ENCODE measurements at regions of chr9 and their contacts with region 1.

Region 1: DNA sequence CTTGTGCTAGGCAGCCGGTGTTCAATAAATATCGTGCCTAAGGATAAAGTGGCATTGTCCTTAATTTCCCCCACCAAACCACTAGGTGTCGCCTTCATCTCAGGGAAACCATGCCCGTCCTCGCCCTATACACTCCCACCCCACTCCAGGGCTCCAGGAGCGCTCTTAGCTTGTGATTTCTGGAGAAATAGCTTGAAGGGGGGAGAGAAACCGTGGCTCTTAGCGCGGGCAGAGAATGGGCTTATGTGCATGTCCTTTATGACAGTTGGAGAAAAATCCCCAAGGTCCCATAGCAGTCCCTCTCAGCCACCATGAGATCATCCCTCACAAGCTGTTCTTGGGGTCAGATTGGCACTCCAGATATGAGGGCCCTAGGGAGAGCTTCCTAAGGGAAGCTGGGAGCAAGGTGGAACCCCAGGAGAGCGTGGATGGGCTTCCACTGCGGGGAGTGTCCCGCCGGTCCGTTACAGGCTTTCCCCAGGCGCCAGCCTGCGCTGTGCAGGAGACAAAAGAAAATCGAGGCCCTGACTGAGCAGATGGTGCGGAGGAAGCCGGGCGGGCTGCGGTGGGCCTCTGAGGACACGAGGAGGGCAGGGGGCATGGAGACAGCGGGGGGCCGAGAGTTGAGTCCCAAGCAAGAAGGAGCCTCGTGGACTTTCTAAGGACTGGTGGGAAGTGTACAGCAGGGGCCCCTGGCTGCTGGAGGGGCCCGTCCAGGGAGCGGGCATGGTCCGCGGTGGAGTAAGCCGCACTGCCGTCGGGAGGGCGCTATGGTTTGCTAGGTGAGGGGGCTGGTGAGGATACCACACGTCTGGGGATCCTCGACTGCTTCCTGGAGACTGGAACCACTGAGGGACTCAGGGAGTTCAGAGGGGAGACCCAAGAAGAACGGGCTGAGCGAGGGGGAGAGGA is 750 bp upstream of the NPR2 start:
- DNase-seq: peak; percentile 71
- H3K4me3 ChIP-seq: peak overlapping the region in 3 of 4 donors; percentile 41 to 55 (median 43)
- H3K27ac ChIP-seq: peak overlapping the region; percentile 66 to 89 (median 73)
- H3K4me1 ChIP-seq: peaks cover 0 to 36% (median 12%) of the 10 kb centered on the region in 4 donors
- H3K27me3 ChIP-seq: no peaks in the 10 kb centered on the region
- CTCF ChIP-seq: peak; percentile 84 to 92 (median 87)
- EP300 ChIP-seq: no peak
- POLR2A ChIP-seq: no peak

Region 2: GRCh38 chr9:35599763-35600604 is 190.7 kb before region 1 on chr9:
- in situ Hi-C with region 1: no loop called
- intact Hi-C with region 1: no loop called
- DNase-seq: no peak
- H3K4me3 ChIP-seq: no peak overlapping the region
- H3K27ac ChIP-seq: no peak overlapping the region
- H3K4me1 ChIP-seq: peaks cover 0 to 13% (median 12%) of the 10 kb centered on the region in 4 donors
- H3K27me3 ChIP-seq: no peaks in the 10 kb centered on the region
- CTCF ChIP-seq: no peak
- EP300 ChIP-seq: no peak
- POLR2A ChIP-seq: no peak

Region 3: DNA sequence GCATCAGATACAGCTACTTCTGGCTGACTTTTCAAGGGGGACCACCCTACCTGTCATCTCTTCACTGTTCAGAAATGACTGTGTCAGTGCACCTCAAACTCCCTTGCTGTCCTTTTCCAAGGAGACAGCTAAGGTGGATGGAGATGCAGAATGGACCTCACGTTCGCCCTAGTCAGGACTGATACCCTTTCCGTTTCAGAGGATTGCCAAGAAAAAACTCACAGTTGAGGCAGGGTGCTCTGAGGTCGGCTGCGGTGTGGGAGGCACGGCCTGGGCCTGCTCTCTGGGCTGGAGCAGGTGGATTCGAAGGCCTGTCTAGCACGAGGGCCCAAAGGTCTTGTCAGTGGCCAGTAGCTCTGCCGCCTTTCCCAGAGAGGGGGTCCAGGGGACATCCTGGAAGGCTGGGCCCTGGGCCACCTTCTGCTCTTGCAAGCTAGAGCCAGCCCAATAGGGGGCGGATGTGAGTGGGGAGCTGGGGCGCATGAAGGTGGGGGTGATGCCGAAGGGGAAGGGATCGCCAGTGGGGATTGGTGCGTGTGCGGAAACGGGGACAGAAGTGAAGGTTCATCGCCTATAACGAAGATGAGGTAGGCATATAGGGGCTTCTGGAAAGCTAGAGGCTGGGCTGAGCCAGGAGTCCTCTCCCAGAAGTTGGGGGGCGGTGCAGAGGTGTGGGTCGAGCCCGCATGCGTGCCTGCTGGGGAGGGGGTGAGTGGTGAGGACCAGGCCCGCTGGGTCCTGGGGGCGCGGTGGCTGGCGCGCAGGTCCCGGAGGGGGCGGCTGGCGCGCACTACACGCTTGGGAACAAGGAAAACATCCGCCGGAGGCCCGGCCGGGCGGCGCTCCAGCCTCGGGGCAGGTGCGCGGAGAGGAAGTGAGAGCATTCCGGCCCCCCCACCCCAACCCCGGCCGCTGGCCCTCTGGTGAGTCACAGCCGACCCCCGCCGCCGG is 34.1 kb before region 1 on chr9:
- in situ Hi-C with region 1: no loop called
- intact Hi-C with region 1: no loop called
- DNase-seq: peak; percentile 83
- H3K4me3 ChIP-seq: peak overlapping the region; percentile 49 to 89 (median 70)
- H3K27ac ChIP-seq: peak overlapping the region; percentile 91 to 97 (median 93)
- H3K4me1 ChIP-seq: peaks cover 11 to 36% (median 16%) of the 10 kb centered on the region in 4 donors
- H3K27me3 ChIP-seq: no peaks in the 10 kb centered on the region
- CTCF ChIP-seq: peak; percentile 68 to 91 (median 76)
- EP300 ChIP-seq: no peak
- POLR2A ChIP-seq: peak; percentile 34

Region 4: GRCh38 chr9:35882263-35882848 is 91.7 kb after region 1 on chr9:
- in situ Hi-C with region 1: loop called in 2 of 4 experiments (anchors 5 to 10 kb)
- intact Hi-C with region 1: loop called (anchors 2 kb)
- DNase-seq: peak; percentile 90
- H3K4me3 ChIP-seq: no peak overlapping the region
- H3K27ac ChIP-seq: no peak overlapping the region
- H3K4me1 ChIP-seq: no peaks in the 10 kb centered on the region
- H3K27me3 ChIP-seq: peaks cover 5% of the 10 kb centered on the region
- CTCF ChIP-seq: peak; percentile 92 to 98 (median 97)
- EP300 ChIP-seq: no peak
- POLR2A ChIP-seq: no peak

Region 5: GRCh38 chr9:35891646-35892045 is 101.0 kb after region 1 on chr9:
- in situ Hi-C with region 1: loop called in 2 of 4 experiments (anchors 10 kb)
- intact Hi-C with region 1: no loop called
- DNase-seq: no peak
- H3K4me3 ChIP-seq: no peak overlapping the region
- H3K27ac ChIP-seq: no peak overlapping the region
- H3K4me1 ChIP-seq: no peaks in the 10 kb centered on the region
- H3K27me3 ChIP-seq: peaks cover 11% of the 10 kb centered on the region
- CTCF ChIP-seq: no peak
- EP300 ChIP-seq: no peak
- POLR2A ChIP-seq: no peak

Region 6: DNA sequence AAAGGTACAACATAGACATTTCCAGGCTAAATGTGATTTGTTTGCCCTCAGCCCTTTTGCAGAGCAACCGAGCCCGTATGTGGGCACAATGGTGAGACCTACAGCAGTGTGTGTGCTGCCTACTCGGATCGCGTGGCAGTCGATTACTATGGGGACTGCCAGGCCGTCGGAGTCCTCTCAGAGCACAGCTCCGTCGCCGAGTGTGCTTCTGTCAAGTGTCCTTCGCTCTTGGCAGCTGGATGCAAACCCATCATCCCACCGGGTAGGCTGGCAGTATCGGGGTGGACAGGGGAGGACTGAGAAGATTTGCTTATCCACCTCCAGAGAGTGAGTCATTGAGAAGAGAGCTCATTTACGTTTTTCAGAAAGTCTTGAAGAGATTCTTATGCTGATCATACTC is 328.1 kb after region 1 on chr9:
- in situ Hi-C with region 1: no loop called
- intact Hi-C with region 1: no loop called
- DNase-seq: no peak
- H3K4me3 ChIP-seq: no peak overlapping the region
- H3K27ac ChIP-seq: no peak overlapping the region
- H3K4me1 ChIP-seq: no peaks in the 10 kb centered on the region
- H3K27me3 ChIP-seq: no peaks in the 10 kb centered on the region
- CTCF ChIP-seq: no peak
- EP300 ChIP-seq: no peak
- POLR2A ChIP-seq: no peak